PC-3 (cell line): ENCODE measurements at regions of chr11 and their contacts with region 1.

Region 1: DNA sequence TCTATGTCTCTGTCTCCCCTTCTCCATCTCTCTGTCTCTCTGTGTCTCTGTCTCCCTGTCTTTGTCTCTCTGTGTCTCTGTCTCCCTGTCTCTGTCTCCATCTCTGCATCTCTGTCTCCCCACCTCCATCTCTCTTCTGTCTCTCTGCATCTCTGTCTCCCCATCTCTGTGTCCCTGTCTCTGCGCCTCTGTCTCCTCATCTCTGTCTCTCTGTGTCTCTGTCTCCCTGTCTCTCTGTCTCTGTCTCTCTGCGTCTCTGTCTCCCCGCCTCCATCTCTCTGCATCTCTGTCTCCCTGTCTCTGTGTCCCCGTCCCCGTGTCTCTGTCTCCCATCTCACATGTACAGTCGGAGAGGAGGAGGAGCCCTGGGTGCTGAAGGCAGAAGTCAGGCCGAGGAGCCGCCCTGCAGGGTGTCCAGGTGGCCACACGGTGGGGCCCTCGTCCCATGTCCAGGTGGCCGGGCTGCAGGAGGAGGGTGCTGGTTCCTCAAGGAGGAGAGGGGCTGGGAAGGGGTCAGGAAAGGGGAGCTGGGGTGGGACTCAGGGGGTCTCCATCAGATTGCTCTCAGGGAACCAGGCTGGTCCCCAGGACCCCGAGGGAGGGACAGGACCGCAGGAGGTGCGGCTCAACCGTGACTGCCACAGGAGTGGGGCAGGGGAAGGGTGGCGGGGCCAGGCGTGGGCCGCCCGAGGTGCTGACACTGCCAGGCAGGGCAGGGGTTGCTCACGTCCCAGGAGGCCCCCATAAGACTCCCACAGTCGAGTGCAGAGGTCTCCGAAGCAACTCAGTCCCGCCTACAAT is 25.6 kb upstream of the TH start:
- DNase-seq: peak; percentile 78
- ATAC-seq: peak; percentile 82
- H3K4me3 ChIP-seq: no peak overlapping the region
- H3K27ac ChIP-seq: no peak overlapping the region
- H3K4me1 ChIP-seq: peaks cover 11% of the 10 kb centered on the region
- H3K27me3 ChIP-seq: no peaks in the 10 kb centered on the region
- CTCF ChIP-seq: peak; percentile 90

Region 2: GRCh38 chr11:2166091-2166851 is 30.9 kb before region 1 on chr11:
- CTCF ChIA-PET with region 1: no interaction called
- POLR2A ChIA-PET with region 1: no interaction called
- intact Hi-C with region 1: loop called (anchors 1 kb)
- DNase-seq: peak; percentile 52
- ATAC-seq: peak; percentile 78
- H3K4me3 ChIP-seq: no peak overlapping the region
- H3K27ac ChIP-seq: no peak overlapping the region
- H3K4me1 ChIP-seq: peaks cover 13% of the 10 kb centered on the region; the same call in 1 of the 2 replicates
- H3K27me3 ChIP-seq: no peaks in the 10 kb centered on the region
- CTCF ChIP-seq: peak; percentile 70

Region 3: DNA sequence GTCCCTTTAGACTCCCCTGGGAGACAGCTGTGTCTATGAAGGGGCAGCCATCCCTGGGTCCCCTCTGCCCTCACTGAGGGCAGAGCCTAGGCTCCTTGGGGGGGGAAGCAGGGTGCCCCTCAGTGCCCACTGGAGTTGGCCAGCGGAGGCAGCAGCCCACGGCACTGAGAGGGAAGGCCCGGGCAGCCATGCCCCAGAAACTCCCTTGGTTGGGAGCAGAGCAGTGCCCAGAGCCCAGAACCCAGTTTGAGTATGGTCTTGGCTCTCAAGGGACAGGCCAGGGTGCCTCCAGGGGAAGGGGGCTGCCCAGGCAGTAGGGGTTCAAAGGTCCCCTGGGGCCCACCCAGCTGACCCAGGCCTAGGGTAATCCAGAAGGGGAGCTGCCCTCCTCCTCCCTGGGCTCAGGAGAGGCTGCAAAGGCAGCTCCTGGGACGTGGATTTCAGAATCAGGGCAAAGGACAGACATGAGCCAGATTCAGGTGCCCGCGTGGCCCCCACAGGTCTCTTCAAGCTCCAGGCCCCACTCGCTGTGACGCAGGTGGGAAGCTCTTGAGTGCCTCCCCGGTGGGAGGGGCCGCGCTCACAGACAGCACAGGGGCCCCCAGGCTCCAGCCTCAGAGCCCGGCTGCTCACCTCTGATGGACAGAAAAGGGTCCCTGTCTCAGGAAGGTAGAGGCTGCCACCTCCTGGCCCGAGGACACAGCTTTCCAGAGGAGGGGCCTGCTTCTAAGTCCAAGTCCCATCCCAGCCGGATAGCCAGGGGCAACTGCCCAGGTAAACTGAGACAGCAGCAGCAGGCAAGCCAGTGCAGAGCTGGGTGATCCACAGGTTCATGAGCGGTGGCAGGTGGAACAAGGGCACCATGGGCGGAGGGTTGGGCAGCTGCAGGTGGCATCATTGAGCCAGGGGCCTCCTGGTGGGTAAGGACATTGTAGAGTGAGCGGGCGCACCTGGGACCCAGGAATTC is 101.9 kb after region 1 on chr11:
- CTCF ChIA-PET with region 1: no interaction called
- POLR2A ChIA-PET with region 1: no interaction called
- intact Hi-C with region 1: loop called (anchors 1 kb)
- DNase-seq: peak; percentile 70
- ATAC-seq: peak; percentile 73
- H3K4me3 ChIP-seq: no peak overlapping the region
- H3K27ac ChIP-seq: no peak overlapping the region
- H3K4me1 ChIP-seq: no peaks in the 10 kb centered on the region
- H3K27me3 ChIP-seq: no peaks in the 10 kb centered on the region
- CTCF ChIP-seq: peak; percentile 76

Region 4: GRCh38 chr11:3815845-3816244 is 1618.7 kb after region 1 on chr11:
- CTCF ChIA-PET with region 1: no interaction called
- POLR2A ChIA-PET with region 1: no interaction called
- intact Hi-C with region 1: no loop called
- DNase-seq: no peak
- ATAC-seq: no peak
- H3K4me3 ChIP-seq: no peak overlapping the region
- H3K27ac ChIP-seq: no peak overlapping the region
- H3K4me1 ChIP-seq: no peaks in the 10 kb centered on the region
- H3K27me3 ChIP-seq: no peaks in the 10 kb centered on the region
- CTCF ChIP-seq: no peak